ENCODE measurements at regions of chr9 and their contacts with region 1.

Region 1: GRCh38 chr9:73081979-73082657 is 69.5 kb upstream of the ANXA1 start:
- H3K4me3 ChIP-seq: no peak overlapping the region
- H3K27ac ChIP-seq: no peak overlapping the region
- H3K4me1 ChIP-seq: no peaks in the 10 kb centered on the region
- CTCF ChIP-seq: 0 out of 2 replicates have a peak, but pooled peaks have one; percentile 38

Region 2: GRCh38 chr9:72843520-72844439 is 238.3 kb before region 1 on chr9:
- CTCF ChIA-PET with region 1: interaction called, 11 read pairs
- POLR2A ChIA-PET with region 1: no interaction called
- H3K4me3 ChIP-seq: no peak overlapping the region
- H3K27ac ChIP-seq: no peak overlapping the region
- H3K4me1 ChIP-seq: no peaks in the 10 kb centered on the region
- CTCF ChIP-seq: no peak

Region 3: GRCh38 chr9:72856972-72857623 is 225.0 kb before region 1 on chr9:
- CTCF ChIA-PET with region 1: interaction called, 31 read pairs
- POLR2A ChIA-PET with region 1: no interaction called
- H3K4me3 ChIP-seq: no peak overlapping the region
- H3K27ac ChIP-seq: no peak overlapping the region
- H3K4me1 ChIP-seq: no peaks in the 10 kb centered on the region
- CTCF ChIP-seq: no peak

Region 4: DNA sequence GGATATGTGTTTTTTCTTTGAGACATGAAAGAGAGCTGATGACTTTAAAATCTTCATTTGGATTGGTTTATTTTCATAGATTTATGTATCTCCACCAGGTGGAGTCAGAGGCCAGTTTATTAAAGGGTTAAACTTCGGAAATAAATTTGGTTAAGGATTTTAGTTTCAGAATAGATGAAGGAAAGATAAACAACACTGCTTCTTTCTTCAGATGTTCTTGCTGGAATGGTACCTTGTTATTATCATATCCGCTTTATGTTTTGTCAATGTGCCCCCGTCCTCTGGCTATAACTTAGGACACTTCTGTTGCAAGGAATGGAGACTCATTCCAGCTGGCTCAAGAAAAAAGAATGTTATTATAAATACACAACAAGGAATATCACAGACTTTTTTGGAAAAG is 210.4 kb before region 1 on chr9:
- CTCF ChIA-PET with region 1: interaction called, 16 read pairs
- POLR2A ChIA-PET with region 1: no interaction called
- H3K4me3 ChIP-seq: no peak overlapping the region
- H3K27ac ChIP-seq: no peak overlapping the region
- H3K4me1 ChIP-seq: no peaks in the 10 kb centered on the region
- CTCF ChIP-seq: no peak

Region 5: DNA sequence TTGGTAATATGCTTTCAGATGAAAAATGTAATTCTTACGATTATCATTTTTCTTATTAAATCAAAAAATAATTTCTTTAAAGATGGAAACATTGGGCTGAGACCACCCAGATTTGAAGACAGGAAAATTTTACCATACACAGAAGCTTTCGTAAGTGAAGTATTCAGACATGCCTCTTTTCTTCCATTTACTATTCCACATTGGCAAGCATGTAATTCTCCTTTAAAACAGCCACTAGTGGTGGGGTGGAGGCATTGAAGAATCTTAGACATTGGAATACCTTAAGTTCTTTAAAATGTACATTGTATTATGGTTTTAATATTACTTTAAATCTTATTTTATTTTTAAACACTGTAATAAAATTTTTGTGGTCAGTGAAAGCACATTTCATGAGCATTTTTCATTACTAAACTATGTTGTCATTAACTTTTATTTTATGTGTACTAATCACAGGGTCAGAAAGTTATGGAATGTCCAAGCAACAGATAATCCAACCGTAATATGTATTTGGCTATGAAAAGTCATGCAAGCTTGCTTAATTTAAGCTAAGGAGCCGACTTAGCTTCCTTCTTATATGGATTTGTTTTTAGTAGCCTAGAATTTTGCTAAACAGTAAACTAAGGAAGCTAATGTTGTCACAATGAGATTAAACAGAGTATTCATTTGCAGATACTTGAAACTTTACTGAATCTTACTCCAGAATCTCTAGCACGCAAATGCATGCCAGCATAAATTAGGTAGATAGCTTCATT is 31.9 kb before region 1 on chr9:
- CTCF ChIA-PET with region 1: interaction called, 11 read pairs
- POLR2A ChIA-PET with region 1: no interaction called
- H3K4me3 ChIP-seq: no peak overlapping the region
- H3K27ac ChIP-seq: no peak overlapping the region
- H3K4me1 ChIP-seq: no peaks in the 10 kb centered on the region
- CTCF ChIP-seq: no peak

Region 6: GRCh38 chr9:73067074-73067473 is 15.0 kb before region 1 on chr9:
- CTCF ChIA-PET with region 1: interaction called, 20 read pairs
- POLR2A ChIA-PET with region 1: no interaction called
- H3K4me3 ChIP-seq: no peak overlapping the region
- H3K27ac ChIP-seq: no peak overlapping the region
- H3K4me1 ChIP-seq: no peaks in the 10 kb centered on the region
- CTCF ChIP-seq: no peak

Region 7: DNA sequence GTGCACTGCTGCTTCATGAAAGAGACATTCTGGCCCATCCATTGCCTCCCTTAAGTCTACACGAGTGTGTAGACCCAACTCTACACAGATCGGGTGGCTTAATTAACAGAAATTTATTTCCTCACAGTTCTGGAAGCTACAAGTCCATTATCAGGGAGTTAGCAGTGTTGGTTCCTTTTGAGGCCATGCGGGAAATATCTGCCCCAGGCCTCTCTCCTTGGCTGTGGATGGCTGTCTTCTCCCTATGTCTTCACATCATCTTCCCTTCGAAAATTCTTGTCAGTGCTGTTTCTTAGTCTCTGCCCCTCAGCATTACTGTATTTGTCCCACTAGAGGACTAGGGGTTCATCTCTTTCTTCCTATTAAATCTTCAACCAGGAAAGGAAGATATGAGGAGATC is 63.3 kb after region 1 on chr9:
- CTCF ChIA-PET with region 1: no interaction called
- POLR2A ChIA-PET with region 1: no interaction called
- H3K4me3 ChIP-seq: no peak overlapping the region
- H3K27ac ChIP-seq: no peak overlapping the region
- H3K4me1 ChIP-seq: peaks cover 5% of the 10 kb centered on the region; the same call in 1 of the 2 replicates
- CTCF ChIP-seq: no peak

Region 8: DNA sequence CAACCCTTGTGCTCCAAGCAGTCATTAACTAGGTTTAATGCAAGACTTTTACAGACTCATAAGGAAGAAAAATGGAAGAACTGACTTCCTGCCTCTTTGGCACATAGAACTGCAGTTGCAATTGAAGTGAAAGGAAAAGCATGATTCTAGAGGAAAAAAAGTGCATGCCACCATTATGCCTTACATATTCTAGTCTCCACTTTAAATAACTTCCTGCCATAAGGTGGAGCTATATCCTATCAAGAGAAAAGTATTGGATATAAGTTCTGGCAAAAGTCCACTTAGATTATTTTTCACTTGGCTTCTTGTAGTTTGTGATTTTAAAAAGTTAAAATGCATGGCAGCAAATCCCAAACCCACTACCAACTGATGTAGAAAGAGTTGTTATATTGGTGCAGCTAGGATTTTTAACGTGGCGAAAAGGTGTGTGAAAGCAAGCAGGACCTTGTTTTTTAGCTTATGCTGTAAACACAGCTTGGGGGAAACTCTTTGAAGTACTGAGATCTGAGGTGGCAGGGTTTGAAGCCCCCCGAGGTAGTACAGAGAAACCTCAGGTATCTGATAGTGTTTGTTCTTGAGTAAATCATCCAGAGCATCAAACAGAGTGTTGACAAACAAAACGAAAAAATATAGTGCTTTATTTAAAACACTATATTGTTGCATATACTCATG is 187.4 kb after region 1 on chr9:
- CTCF ChIA-PET with region 1: no interaction called
- POLR2A ChIA-PET with region 1: no interaction called
- H3K4me3 ChIP-seq: no peak overlapping the region
- H3K27ac ChIP-seq: no peak overlapping the region
- H3K4me1 ChIP-seq: no peaks in the 10 kb centered on the region
- CTCF ChIP-seq: no peak

Measured in HEK293 (cell line).